Left ventricle myocardium superior (tissue), 1 donor: ENCODE measurements at regions of chr7 and their contacts with region 1.

Region 1: GRCh38 chr7:74569501-74570075 is 87.9 kb upstream of the GTF2I start:
- DNase-seq: no peak
- ATAC-seq: no peak

Region 2: GRCh38 chr7:74417419-74417971 is 152.1 kb before region 1 on chr7:
- intact Hi-C with region 1: loop called (anchors 5 kb)
- DNase-seq: peak; percentile 71
- ATAC-seq: peak; percentile 94